Heart right ventricle (tissue), 16 donors: ENCODE measurements at regions of chr9 and their contacts with region 1.

Region 1: GRCh38 chr9:32526041-32526706 is at the start of gene RIGI:
- DNase-seq: peak; percentile 91 to 96
- ATAC-seq: peak; percentile 94 to 97 (median 96)
- H3K4me3 ChIP-seq: peak within 1 kb of the TSS; percentile 39 to 91 (median 68)
- H3K27ac ChIP-seq: peak within 1 kb of the TSS; percentile 41 to 92 (median 84)
- H3K4me1 ChIP-seq: peaks cover 4 to 41% (median 33%) of the 10 kb centered on the region in 9 donors
- H3K27me3 ChIP-seq: no peaks in the 10 kb centered on the region
- CTCF ChIP-seq: peak in 8 of 9 donors; percentile 39 to 72 (median 54)
- total RNA-seq, gene RIGI: 3.0 to 15.2 (median 5.0) TPM

Region 2: DNA sequence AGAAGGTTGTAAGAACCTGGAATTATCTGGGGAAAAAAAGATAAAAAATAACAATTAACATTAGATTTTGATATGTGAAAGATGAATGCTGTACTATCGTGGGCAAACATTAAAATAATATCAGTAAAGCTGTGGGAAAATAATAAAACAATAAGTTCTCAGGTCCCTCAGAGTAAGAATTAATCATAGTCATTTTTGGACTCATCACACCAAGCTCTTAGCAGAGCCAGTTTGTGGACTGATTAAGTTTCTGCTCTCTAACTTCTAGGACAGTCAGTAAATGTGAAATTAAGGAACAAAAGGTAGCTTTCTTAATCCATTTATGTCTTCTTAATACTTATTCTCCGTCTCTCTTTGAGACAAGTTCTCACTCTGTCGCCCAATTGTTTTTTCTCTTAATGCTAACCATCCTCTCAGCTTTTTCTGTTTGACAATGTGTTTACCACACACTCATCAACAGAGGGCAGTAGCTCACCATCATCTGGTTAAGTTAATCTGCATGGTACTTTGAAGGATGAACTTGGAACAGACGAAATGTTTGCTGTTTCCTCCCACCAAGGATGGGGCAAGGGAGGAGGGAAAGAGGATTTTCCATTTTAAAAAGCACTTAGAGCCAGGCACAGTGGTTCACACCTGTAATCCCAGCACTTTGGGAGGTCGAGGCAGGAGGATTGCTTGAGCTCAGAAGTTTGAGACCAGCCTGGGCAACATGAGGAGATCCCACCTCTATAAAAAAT is 147.0 kb before region 1 on chr9:
- intact Hi-C with region 1: loop called in 5 of 10 experiments (anchors 1 to 10 kb)
- DNase-seq: peak in 1 of 2 donors; percentile 47
- ATAC-seq: peak; percentile 72 to 91 (median 82)
- H3K4me3 ChIP-seq: no peak overlapping the region
- H3K27ac ChIP-seq: no peak overlapping the region
- H3K4me1 ChIP-seq: peaks cover 0 to 19% (median 6%) of the 10 kb centered on the region in 9 donors
- H3K27me3 ChIP-seq: peaks cover 0 to 13% (median 0%) of the 10 kb centered on the region in 7 donors
- CTCF ChIP-seq: peak; percentile 62 to 92 (median 81)

Region 3: GRCh38 chr9:32463500-32464293 is 62.5 kb before region 1 on chr9:
- intact Hi-C with region 1: loop called in 1 of 10 experiments (anchors 10 kb)
- DNase-seq: no peak
- ATAC-seq: no peak
- H3K4me3 ChIP-seq: no peak overlapping the region
- H3K27ac ChIP-seq: no peak overlapping the region
- H3K4me1 ChIP-seq: no peaks in the 10 kb centered on the region
- H3K27me3 ChIP-seq: no peaks in the 10 kb centered on the region
- CTCF ChIP-seq: no peak

Region 4: GRCh38 chr9:32490601-32491000 is 35.6 kb before region 1 on chr9:
- intact Hi-C with region 1: loop called in 1 of 10 experiments (anchors 5 kb)
- DNase-seq: no peak
- ATAC-seq: no peak
- H3K4me3 ChIP-seq: no peak overlapping the region
- H3K27ac ChIP-seq: no peak overlapping the region
- H3K4me1 ChIP-seq: no peaks in the 10 kb centered on the region
- H3K27me3 ChIP-seq: no peaks in the 10 kb centered on the region
- CTCF ChIP-seq: no peak

Region 5: GRCh38 chr9:32550562-32551433 is 24.6 kb after region 1 on chr9:
- intact Hi-C with region 1: loop called in 2 of 10 experiments (anchors 1 to 2 kb)
- DNase-seq: peak; percentile 93 to 94
- ATAC-seq: peak; percentile 88 to 95 (median 91)
- H3K4me3 ChIP-seq: peak overlapping the region; percentile 55 to 96 (median 82)
- H3K27ac ChIP-seq: peak overlapping the region; percentile 90 to 98 (median 96)
- H3K4me1 ChIP-seq: peaks cover 0 to 44% (median 25%) of the 10 kb centered on the region in 9 donors
- H3K27me3 ChIP-seq: no peaks in the 10 kb centered on the region
- CTCF ChIP-seq: peak in 2 of 9 donors; percentile 34 to 40

Region 6: GRCh38 chr9:32839013-32839885 is 313.1 kb after region 1 on chr9:
- intact Hi-C with region 1: no loop called
- DNase-seq: no peak
- ATAC-seq: no peak
- H3K4me3 ChIP-seq: no peak overlapping the region
- H3K27ac ChIP-seq: no peak overlapping the region
- H3K4me1 ChIP-seq: no peaks in the 10 kb centered on the region
- H3K27me3 ChIP-seq: peaks cover 0 to 21% (median under 1%) of the 10 kb centered on the region in 7 donors
- CTCF ChIP-seq: no peak